ENCODE measurements at regions of chr7 and their contacts with region 1.

Region 1: GRCh38 chr7:137898839-137899721 is 52.3 kb upstream of the DGKI start:
- DNase-seq: peak; percentile 44 to 85 (median 77)
- ATAC-seq: peak; percentile 96
- H3K4me3 ChIP-seq: peak overlapping the region in 1 of 2 experiments; percentile 28
- H3K4me3 Mint-ChIP-seq: peak overlapping the region; percentile 44
- H3K27ac ChIP-seq: no peak overlapping the region
- H3K27ac Mint-ChIP-seq: peak overlapping the region; percentile 27
- H3K4me1 ChIP-seq: peaks cover 9% of the 10 kb centered on the region
- H3K4me1 Mint-ChIP-seq: peaks cover 18% of the 10 kb centered on the region
- H3K27me3 ChIP-seq: no peaks in the 10 kb centered on the region
- H3K27me3 Mint-ChIP-seq: no peaks in the 10 kb centered on the region
- CTCF ChIP-seq: peak; percentile 94

Region 2: GRCh38 chr7:137036768-137037167 is 862.3 kb before region 1 on chr7:
- CTCF ChIA-PET with region 1: no interaction called
- POLR2A ChIA-PET with region 1: no interaction called
- intact Hi-C with region 1: no loop called
- DNase-seq: no peak
- ATAC-seq: no peak
- H3K4me3 ChIP-seq: no peak overlapping the region
- H3K4me3 Mint-ChIP-seq: no peak overlapping the region
- H3K27ac ChIP-seq: no peak overlapping the region
- H3K27ac Mint-ChIP-seq: no peak overlapping the region
- H3K4me1 ChIP-seq: no peaks in the 10 kb centered on the region
- H3K4me1 Mint-ChIP-seq: no peaks in the 10 kb centered on the region
- H3K27me3 ChIP-seq: no peaks in the 10 kb centered on the region
- H3K27me3 Mint-ChIP-seq: no peaks in the 10 kb centered on the region
- CTCF ChIP-seq: no peak

Region 3: DNA sequence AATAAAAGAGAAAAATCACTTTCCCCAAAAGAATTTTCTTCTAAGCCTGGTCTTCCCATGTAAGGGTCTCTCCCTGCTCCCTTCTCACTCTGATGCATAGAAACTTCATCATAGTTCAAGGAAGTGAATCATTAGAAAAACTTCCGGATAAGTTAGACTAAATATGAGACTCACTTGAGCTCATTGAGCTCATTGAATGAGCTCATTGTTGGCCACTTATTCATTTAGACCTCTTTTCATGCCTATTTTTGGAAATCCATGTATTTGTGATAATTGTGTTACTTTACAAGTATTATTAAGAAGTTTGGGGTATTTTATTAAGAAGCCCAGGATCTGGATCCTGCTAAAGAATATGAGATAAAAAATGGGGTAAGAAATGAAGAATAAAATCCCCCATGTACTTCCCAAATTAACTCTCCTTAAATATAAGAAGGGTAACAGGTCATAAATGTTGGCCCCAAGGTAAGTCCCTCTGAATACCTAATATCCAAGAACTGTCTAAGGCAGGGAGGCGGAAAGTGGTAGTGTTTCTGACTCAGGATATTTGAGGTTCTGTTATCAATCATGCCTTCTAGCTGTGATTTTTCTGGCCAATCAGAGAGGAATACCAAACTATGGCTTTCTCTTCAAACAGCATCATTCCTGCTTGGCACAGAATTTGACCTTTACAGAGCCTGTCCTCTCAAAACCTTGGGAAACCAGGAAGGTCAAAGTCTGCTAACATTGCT is 319.0 kb before region 1 on chr7:
- CTCF ChIA-PET with region 1: no interaction called
- POLR2A ChIA-PET with region 1: no interaction called
- intact Hi-C with region 1: no loop called
- DNase-seq: no peak
- ATAC-seq: no peak
- H3K4me3 ChIP-seq: no peak overlapping the region
- H3K4me3 Mint-ChIP-seq: no peak overlapping the region
- H3K27ac ChIP-seq: no peak overlapping the region
- H3K27ac Mint-ChIP-seq: no peak overlapping the region
- H3K4me1 ChIP-seq: no peaks in the 10 kb centered on the region
- H3K4me1 Mint-ChIP-seq: no peaks in the 10 kb centered on the region
- H3K27me3 ChIP-seq: peaks cover 0 to 3% of the 10 kb centered on the region in 2 experiments
- H3K27me3 Mint-ChIP-seq: peaks cover 8% of the 10 kb centered on the region
- CTCF ChIP-seq: no peak

Region 4: GRCh38 chr7:137606061-137606674 is 292.9 kb before region 1 on chr7:
- CTCF ChIA-PET with region 1: interaction called, 5 read pairs
- POLR2A ChIA-PET with region 1: no interaction called
- intact Hi-C with region 1: loop called in 1 of 2 experiments (anchors 1 kb)
- DNase-seq: peak in 2 of 9 experiments; percentile 11 to 31
- ATAC-seq: no peak
- H3K4me3 ChIP-seq: no peak overlapping the region
- H3K4me3 Mint-ChIP-seq: no peak overlapping the region
- H3K27ac ChIP-seq: no peak overlapping the region
- H3K27ac Mint-ChIP-seq: no peak overlapping the region
- H3K4me1 ChIP-seq: no peaks in the 10 kb centered on the region
- H3K4me1 Mint-ChIP-seq: no peaks in the 10 kb centered on the region
- H3K27me3 ChIP-seq: no peaks in the 10 kb centered on the region
- H3K27me3 Mint-ChIP-seq: peaks cover 5% of the 10 kb centered on the region
- CTCF ChIP-seq: peak; percentile 40

Region 5: DNA sequence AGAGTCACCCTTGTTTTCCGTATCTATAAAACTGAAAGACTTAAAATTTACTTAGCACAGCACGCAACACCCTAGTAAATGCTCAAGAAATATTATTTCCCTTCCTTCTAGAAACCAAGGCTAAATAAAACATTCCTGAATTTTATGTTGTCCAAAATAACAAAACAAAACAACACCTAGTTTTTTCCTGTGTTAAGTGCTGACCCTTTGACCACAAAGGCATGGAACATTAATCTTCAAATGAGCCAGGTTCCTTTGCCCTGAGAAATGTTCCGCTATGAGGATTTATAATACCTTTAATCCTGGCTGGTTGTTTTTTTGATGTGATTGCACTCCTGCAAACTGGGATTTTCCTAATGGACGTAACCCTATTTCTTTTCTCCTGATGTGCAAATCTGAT is 23.3 kb before region 1 on chr7:
- CTCF ChIA-PET with region 1: no interaction called
- POLR2A ChIA-PET with region 1: no interaction called
- intact Hi-C with region 1: no loop called
- DNase-seq: no peak
- ATAC-seq: no peak
- H3K4me3 ChIP-seq: no peak overlapping the region
- H3K4me3 Mint-ChIP-seq: no peak overlapping the region
- H3K27ac ChIP-seq: no peak overlapping the region
- H3K27ac Mint-ChIP-seq: no peak overlapping the region
- H3K4me1 ChIP-seq: no peaks in the 10 kb centered on the region
- H3K4me1 Mint-ChIP-seq: no peaks in the 10 kb centered on the region
- H3K27me3 ChIP-seq: no peaks in the 10 kb centered on the region
- H3K27me3 Mint-ChIP-seq: no peaks in the 10 kb centered on the region
- CTCF ChIP-seq: no peak

Region 6: GRCh38 chr7:137920637-137921399 is 21.7 kb after region 1 on chr7:
- CTCF ChIA-PET with region 1: interaction called, 19 read pairs
- POLR2A ChIA-PET with region 1: no interaction called
- intact Hi-C with region 1: no loop called
- DNase-seq: no peak
- ATAC-seq: no peak
- H3K4me3 ChIP-seq: no peak overlapping the region
- H3K4me3 Mint-ChIP-seq: no peak overlapping the region
- H3K27ac ChIP-seq: no peak overlapping the region
- H3K27ac Mint-ChIP-seq: peak overlapping the region; percentile 5
- H3K4me1 ChIP-seq: no peaks in the 10 kb centered on the region
- H3K4me1 Mint-ChIP-seq: peaks cover 20% of the 10 kb centered on the region
- H3K27me3 ChIP-seq: no peaks in the 10 kb centered on the region
- H3K27me3 Mint-ChIP-seq: no peaks in the 10 kb centered on the region
- CTCF ChIP-seq: no peak

Region 7: DNA sequence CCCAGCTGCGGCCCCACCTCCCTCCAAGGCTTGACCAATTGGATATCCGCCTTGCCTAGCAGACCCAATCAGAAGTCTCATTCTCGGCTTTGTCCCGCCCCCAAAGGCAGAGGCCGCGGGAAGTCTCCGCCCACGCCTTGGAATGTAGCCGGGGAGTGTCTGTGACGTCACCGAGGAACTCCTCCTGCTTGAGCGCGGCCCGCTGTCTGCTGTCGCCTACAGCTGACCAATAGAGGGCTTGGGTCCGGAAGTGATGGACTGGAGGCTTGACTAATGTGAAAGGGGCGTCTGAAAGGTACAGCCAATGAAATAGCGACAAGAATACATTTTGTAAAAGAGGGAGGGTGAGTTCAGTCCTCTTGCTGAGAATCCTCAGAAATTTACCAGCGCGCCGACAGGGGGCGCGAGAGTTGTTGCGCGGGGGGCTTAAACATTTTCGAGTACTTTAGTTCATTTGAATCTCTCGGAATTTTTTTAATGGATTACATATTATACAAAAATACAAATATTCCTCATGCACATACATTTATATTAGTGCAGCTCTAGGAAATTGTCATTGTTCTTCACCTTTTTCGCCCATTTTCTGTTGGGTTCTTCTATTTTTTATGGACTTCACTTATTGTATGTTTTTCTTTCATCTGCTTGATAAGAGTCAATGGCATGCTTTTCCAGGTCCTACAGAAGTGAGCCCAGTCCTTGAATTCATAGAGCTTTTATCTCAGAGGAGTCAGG is 103.2 kb after region 1 on chr7:
- CTCF ChIA-PET with region 1: interaction called, 342 read pairs
- POLR2A ChIA-PET with region 1: interaction called, 6 read pairs
- intact Hi-C with region 1: no loop called
- DNase-seq: peak; percentile 96 to 100 (median 98)
- ATAC-seq: peak; percentile 88
- H3K4me3 ChIP-seq: peak overlapping the region; percentile 81 to 97
- H3K4me3 Mint-ChIP-seq: peak overlapping the region; percentile 90
- H3K27ac ChIP-seq: peak overlapping the region; percentile 72 to 85
- H3K27ac Mint-ChIP-seq: peak overlapping the region; percentile 91
- H3K4me1 ChIP-seq: peaks cover 11% of the 10 kb centered on the region
- H3K4me1 Mint-ChIP-seq: peaks cover 33% of the 10 kb centered on the region
- H3K27me3 ChIP-seq: no peaks in the 10 kb centered on the region
- H3K27me3 Mint-ChIP-seq: no peaks in the 10 kb centered on the region
- CTCF ChIP-seq: peak; percentile 96

Region 8: DNA sequence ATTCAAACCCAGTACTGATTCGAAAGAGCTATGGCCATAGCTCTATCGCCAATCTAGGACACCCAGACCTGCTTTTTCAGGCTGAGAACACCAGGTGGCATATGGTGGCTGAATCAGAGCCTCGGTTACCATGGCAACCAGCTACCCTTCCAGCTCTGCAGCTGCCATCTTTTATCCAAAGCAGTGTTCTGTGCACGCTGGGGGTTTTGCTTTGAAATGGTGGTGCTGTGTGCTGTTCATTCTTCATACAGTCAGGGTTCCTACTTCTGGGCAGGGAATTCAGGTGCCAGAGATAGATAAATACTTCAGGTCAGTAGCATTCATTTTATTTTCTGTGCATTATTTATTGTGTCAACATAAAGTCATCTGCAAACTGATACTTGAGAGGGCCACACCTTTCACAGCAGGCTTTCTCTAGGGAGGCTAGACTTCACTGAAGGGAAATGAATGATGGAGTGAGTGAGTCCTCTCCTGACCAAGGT is 262.6 kb after region 1 on chr7:
- CTCF ChIA-PET with region 1: interaction called, 3 read pairs
- POLR2A ChIA-PET with region 1: no interaction called
- intact Hi-C with region 1: loop called (anchors 5 to 10 kb)
- DNase-seq: peak; percentile 42 to 93 (median 74)
- ATAC-seq: peak; percentile 99
- H3K4me3 ChIP-seq: no peak overlapping the region
- H3K4me3 Mint-ChIP-seq: no peak overlapping the region
- H3K27ac ChIP-seq: no peak overlapping the region
- H3K27ac Mint-ChIP-seq: no peak overlapping the region
- H3K4me1 ChIP-seq: peaks cover 5% of the 10 kb centered on the region
- H3K4me1 Mint-ChIP-seq: no peaks in the 10 kb centered on the region
- H3K27me3 ChIP-seq: no peaks in the 10 kb centered on the region
- H3K27me3 Mint-ChIP-seq: peaks cover 3% of the 10 kb centered on the region
- CTCF ChIP-seq: peak; percentile 69

Region 9: GRCh38 chr7:138865843-138866242 is 966.8 kb after region 1 on chr7:
- CTCF ChIA-PET with region 1: interaction called, 3 read pairs
- POLR2A ChIA-PET with region 1: no interaction called
- intact Hi-C with region 1: loop called (anchors 1 to 5 kb)
- DNase-seq: peak in 7 of 9 experiments; percentile 19 to 66 (median 56)
- ATAC-seq: peak; percentile 87
- H3K4me3 ChIP-seq: no peak overlapping the region
- H3K4me3 Mint-ChIP-seq: no peak overlapping the region
- H3K27ac ChIP-seq: no peak overlapping the region
- H3K27ac Mint-ChIP-seq: no peak overlapping the region
- H3K4me1 ChIP-seq: no peaks in the 10 kb centered on the region
- H3K4me1 Mint-ChIP-seq: peaks cover 4% of the 10 kb centered on the region
- H3K27me3 ChIP-seq: no peaks in the 10 kb centered on the region
- H3K27me3 Mint-ChIP-seq: peaks cover 3% of the 10 kb centered on the region
- CTCF ChIP-seq: peak; percentile 52